Activated CD8-positive, alpha-beta T cell treated with anti-CD3 and anti-CD28 coated beads, Interleukin-2, amount 10 ng/mL, durations not matched to agents 7 days and 5 days (primary cell): ENCODE measurements at regions of chr13 and their contacts with region 1.

Region 1: DNA sequence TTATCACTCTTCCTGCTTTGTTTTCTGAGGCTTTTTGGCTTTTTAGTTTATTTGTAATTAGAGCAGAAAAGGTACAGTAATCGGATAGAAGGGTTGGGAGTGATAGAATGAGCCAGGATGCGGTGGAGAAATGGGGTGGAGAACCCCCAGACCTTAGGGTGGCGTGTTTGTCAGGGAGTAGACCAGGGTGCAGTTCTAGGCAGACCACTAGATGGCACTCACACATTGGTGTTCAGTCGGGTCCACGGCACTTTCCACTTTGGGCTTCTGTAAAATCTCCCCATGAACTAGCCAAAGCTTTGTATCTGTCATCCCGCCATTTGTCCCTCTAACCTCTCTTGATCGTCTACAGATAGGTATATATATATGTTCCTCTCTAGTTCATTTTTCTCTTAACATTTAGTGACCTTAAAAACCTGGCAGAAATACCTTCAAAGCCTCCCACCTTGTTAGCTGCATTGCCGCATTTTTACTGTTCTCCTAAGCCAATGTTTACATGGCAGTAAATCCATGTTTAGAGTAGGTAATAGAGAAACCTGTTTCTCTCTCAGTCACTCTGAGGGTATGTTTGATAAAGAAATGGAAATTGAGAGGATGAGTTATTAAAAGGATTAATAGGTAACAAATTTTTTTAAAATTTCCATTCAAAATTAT is 154.9 kb downstream of the TM9SF2 start:
- DNase-seq: peak; percentile 89
- ATAC-seq: peak; percentile 54
- H3K4me3 Mint-ChIP-seq: peak overlapping the region; percentile 66
- H3K27ac Mint-ChIP-seq: peak overlapping the region; percentile 80
- H3K4me1 Mint-ChIP-seq: peaks cover 48% of the 10 kb centered on the region
- H3K27me3 Mint-ChIP-seq: peaks cover 10% of the 10 kb centered on the region

Region 2: GRCh38 chr13:99528547-99528946 is 127.7 kb before region 1 on chr13:
- CTCF ChIA-PET with region 1: interaction called, 11 read pairs
- POLR2A ChIA-PET with region 1: no interaction called
- DNase-seq: peak; percentile 49
- ATAC-seq: peak; percentile 48
- H3K4me3 Mint-ChIP-seq: no peak overlapping the region
- H3K27ac Mint-ChIP-seq: no peak overlapping the region
- H3K4me1 Mint-ChIP-seq: peaks cover 24% of the 10 kb centered on the region
- H3K27me3 Mint-ChIP-seq: no peaks in the 10 kb centered on the region

Region 3: DNA sequence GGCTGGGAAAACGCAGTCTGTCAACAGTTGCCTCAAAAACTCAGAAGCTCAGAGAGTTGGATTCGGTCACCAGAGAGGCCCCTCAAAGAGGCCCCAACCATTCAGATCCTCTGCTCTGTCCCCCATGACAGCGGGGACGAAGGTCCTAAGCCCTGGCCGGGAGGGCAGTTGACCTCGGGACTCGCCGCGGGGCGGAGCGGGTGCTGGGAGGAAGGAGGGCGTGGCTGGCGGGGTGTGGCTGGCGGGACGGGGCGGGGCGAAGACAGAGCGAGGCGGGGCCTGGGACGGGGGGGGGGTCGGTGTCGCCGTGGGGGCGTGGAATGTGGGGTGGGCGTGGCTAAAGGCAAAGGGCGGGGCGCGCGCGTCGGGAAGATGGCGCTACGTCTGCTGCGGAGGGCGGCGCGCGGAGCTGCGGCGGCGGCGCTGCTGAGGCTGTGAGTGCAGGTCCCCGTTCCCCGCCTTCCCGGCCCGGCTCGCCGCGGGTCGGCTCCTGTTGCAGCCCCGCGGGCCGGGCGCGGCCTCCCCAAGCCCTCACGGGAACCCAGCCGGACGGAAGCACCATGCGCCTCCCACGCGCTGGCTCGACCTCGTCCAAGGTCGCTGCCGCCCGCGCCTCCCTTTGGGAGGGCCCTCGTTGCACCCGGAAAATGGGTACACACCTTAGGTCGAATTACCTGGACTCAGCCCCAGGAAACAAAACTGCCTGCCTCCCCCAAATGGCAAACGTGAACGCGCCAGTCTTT is 49.7 kb before region 1 on chr13:
- CTCF ChIA-PET with region 1: interaction called, 17 read pairs
- POLR2A ChIA-PET with region 1: no interaction called
- DNase-seq: peak; percentile 92
- ATAC-seq: peak; percentile 91
- H3K4me3 Mint-ChIP-seq: peak within 1 kb of the TSS; percentile 80
- H3K27ac Mint-ChIP-seq: peak within 1 kb of the TSS; percentile 93
- H3K4me1 Mint-ChIP-seq: peaks cover 38% of the 10 kb centered on the region
- H3K27me3 Mint-ChIP-seq: peaks cover 2% of the 10 kb centered on the region

Region 4: GRCh38 chr13:99671746-99672145 is 15.5 kb after region 1 on chr13:
- CTCF ChIA-PET with region 1: interaction called, 20 read pairs
- POLR2A ChIA-PET with region 1: no interaction called
- DNase-seq: no peak
- ATAC-seq: no peak
- H3K4me3 Mint-ChIP-seq: no peak overlapping the region
- H3K27ac Mint-ChIP-seq: no peak overlapping the region
- H3K4me1 Mint-ChIP-seq: no peaks in the 10 kb centered on the region
- H3K27me3 Mint-ChIP-seq: no peaks in the 10 kb centered on the region

Region 5: GRCh38 chr13:99898421-99898820 is 242.2 kb after region 1 on chr13:
- CTCF ChIA-PET with region 1: interaction called, 23 read pairs
- POLR2A ChIA-PET with region 1: no interaction called
- DNase-seq: no peak
- ATAC-seq: no peak
- H3K4me3 Mint-ChIP-seq: no peak overlapping the region
- H3K27ac Mint-ChIP-seq: no peak overlapping the region
- H3K4me1 Mint-ChIP-seq: peaks cover 18% of the 10 kb centered on the region
- H3K27me3 Mint-ChIP-seq: peaks cover 68% of the 10 kb centered on the region

Region 6: GRCh38 chr13:100235311-100235901 is 579.2 kb after region 1 on chr13:
- CTCF ChIA-PET with region 1: interaction called, 23 read pairs
- POLR2A ChIA-PET with region 1: no interaction called
- DNase-seq: peak; percentile 31
- ATAC-seq: no peak
- H3K4me3 Mint-ChIP-seq: no peak overlapping the region
- H3K27ac Mint-ChIP-seq: no peak overlapping the region
- H3K4me1 Mint-ChIP-seq: peaks cover 4% of the 10 kb centered on the region
- H3K27me3 Mint-ChIP-seq: no peaks in the 10 kb centered on the region

Region 7: DNA sequence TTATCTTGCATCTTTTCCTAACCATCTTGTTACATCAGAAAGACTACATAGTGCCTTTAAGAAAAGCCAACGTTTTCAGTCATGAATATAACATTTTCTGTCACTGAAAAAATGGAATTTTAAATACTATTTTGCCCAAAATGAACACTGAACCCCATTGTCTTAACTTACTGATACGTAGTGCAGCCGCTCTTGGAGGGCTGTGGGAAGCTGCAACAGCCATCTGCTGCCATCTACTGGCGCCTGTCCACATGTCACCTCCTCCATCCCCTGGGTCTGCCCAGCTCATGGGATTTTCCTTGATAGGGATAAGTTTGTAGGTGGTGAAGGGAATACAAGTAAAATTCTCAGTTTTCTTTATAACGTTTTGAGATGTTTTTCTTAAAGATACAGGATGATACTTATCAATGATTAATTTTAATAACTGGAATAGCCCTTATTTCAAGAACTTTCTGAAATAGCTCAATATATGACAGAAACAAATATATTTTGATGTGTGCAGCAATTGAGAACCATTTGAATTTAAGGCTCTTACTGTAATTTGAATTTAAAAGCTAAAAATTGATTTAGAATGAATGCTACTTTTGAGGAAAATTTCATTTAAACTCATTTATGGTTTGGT is 858.7 kb after region 1 on chr13:
- CTCF ChIA-PET with region 1: interaction called, 35 read pairs
- POLR2A ChIA-PET with region 1: no interaction called
- DNase-seq: peak; percentile 79
- ATAC-seq: peak; percentile 97
- H3K4me3 Mint-ChIP-seq: no peak overlapping the region
- H3K27ac Mint-ChIP-seq: no peak overlapping the region
- H3K4me1 Mint-ChIP-seq: peaks cover 3% of the 10 kb centered on the region
- H3K27me3 Mint-ChIP-seq: no peaks in the 10 kb centered on the region